ENCODE measurements at regions of chr18 and their contacts with region 1.

Region 1: DNA sequence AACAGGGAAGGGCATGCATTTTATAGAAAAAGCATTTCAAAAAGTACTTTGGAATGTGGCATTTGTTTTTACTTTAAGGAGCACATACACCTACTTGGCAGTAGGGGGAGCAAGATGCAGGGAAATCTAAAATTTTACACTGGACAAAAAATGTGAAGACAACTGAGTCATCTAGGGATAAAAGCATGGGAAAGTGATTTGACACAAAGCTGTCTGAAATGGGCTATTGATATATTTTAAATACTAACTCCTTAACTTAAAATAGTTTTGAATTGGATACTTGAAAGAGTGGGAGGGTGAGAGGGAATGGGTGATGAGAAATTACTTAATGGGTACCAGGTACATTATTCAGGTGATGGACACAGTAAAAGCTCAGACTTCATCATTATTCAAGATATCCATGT is 15.8 kb downstream of the TMEM200C start:
- DNase-seq: peak in 1 of 2 experiments; percentile 31
- H3K4me3 ChIP-seq: no peak overlapping the region
- H3K4me3 Mint-ChIP-seq: no peak overlapping the region
- H3K27ac Mint-ChIP-seq: no peak overlapping the region
- H3K4me1 ChIP-seq: no peaks in the 10 kb centered on the region
- H3K4me1 Mint-ChIP-seq: no peaks in the 10 kb centered on the region
- H3K27me3 ChIP-seq: 0 out of 2 replicates have a peak, but pooled peaks cover 2% of the 10 kb centered on the region
- H3K27me3 Mint-ChIP-seq: no peaks in the 10 kb centered on the region
- CTCF ChIP-seq: peak; percentile 72 to 75

Region 2: GRCh38 chr18:5951515-5952091 is 72.1 kb after region 1 on chr18:
- CTCF ChIA-PET with region 1: no interaction called
- POLR2A ChIA-PET with region 1: no interaction called
- intact Hi-C with region 1: loop called (anchors 1 kb)
- DNase-seq: no peak
- H3K4me3 ChIP-seq: no peak overlapping the region
- H3K4me3 Mint-ChIP-seq: no peak overlapping the region
- H3K27ac Mint-ChIP-seq: no peak overlapping the region
- H3K4me1 ChIP-seq: no peaks in the 10 kb centered on the region
- H3K4me1 Mint-ChIP-seq: no peaks in the 10 kb centered on the region
- H3K27me3 ChIP-seq: no peaks in the 10 kb centered on the region
- H3K27me3 Mint-ChIP-seq: peaks cover 10% of the 10 kb centered on the region
- CTCF ChIP-seq: no peak

Region 3: DNA sequence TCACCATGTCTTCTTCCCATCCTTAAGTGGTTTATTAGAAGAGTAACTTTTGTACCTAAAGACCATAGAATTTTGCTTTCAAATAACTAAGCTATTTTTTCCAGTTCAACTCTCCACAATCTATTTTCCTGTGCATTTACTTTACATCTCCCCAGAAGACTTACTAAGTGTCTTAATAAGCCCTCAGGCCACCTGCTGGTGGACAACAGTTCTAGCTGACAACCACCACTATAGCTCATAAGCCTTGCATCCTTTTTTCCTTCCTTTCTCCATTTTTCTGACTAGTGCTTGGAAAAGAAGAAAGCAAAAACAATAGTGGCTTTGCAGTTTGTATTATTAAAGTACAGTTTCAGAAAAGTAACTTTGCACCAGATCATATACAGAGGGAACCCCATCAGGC is 165.3 kb after region 1 on chr18:
- CTCF ChIA-PET with region 1: no interaction called
- POLR2A ChIA-PET with region 1: no interaction called
- intact Hi-C with region 1: loop called (anchors 1 kb)
- DNase-seq: no peak
- H3K4me3 ChIP-seq: no peak overlapping the region
- H3K4me3 Mint-ChIP-seq: no peak overlapping the region
- H3K27ac Mint-ChIP-seq: no peak overlapping the region
- H3K4me1 ChIP-seq: no peaks in the 10 kb centered on the region
- H3K4me1 Mint-ChIP-seq: no peaks in the 10 kb centered on the region
- H3K27me3 ChIP-seq: no peaks in the 10 kb centered on the region; the same call in 1 of the 2 replicates
- H3K27me3 Mint-ChIP-seq: peaks cover 19% of the 10 kb centered on the region
- CTCF ChIP-seq: peak; percentile 21 to 37

Region 4: GRCh38 chr18:6056146-6056932 is 176.9 kb after region 1 on chr18:
- CTCF ChIA-PET with region 1: no interaction called
- POLR2A ChIA-PET with region 1: no interaction called
- intact Hi-C with region 1: no loop called
- DNase-seq: no peak
- H3K4me3 ChIP-seq: no peak overlapping the region
- H3K4me3 Mint-ChIP-seq: no peak overlapping the region
- H3K27ac Mint-ChIP-seq: no peak overlapping the region
- H3K4me1 ChIP-seq: no peaks in the 10 kb centered on the region
- H3K4me1 Mint-ChIP-seq: no peaks in the 10 kb centered on the region
- H3K27me3 ChIP-seq: no peaks in the 10 kb centered on the region
- H3K27me3 Mint-ChIP-seq: peaks cover 3% of the 10 kb centered on the region
- CTCF ChIP-seq: no peak

Region 5: GRCh38 chr18:6096730-6097129 is 217.2 kb after region 1 on chr18:
- CTCF ChIA-PET with region 1: no interaction called
- POLR2A ChIA-PET with region 1: no interaction called
- intact Hi-C with region 1: no loop called
- DNase-seq: no peak
- H3K4me3 ChIP-seq: no peak overlapping the region
- H3K4me3 Mint-ChIP-seq: no peak overlapping the region
- H3K27ac Mint-ChIP-seq: no peak overlapping the region
- H3K4me1 ChIP-seq: no peaks in the 10 kb centered on the region
- H3K4me1 Mint-ChIP-seq: no peaks in the 10 kb centered on the region
- H3K27me3 ChIP-seq: no peaks in the 10 kb centered on the region
- H3K27me3 Mint-ChIP-seq: peaks cover 27% of the 10 kb centered on the region
- CTCF ChIP-seq: no peak

Region 6: GRCh38 chr18:6132751-6133368 is 253.4 kb after region 1 on chr18:
- CTCF ChIA-PET with region 1: no interaction called
- POLR2A ChIA-PET with region 1: no interaction called
- intact Hi-C with region 1: no loop called
- DNase-seq: no peak
- H3K4me3 ChIP-seq: no peak overlapping the region
- H3K4me3 Mint-ChIP-seq: no peak overlapping the region
- H3K27ac Mint-ChIP-seq: no peak overlapping the region
- H3K4me1 ChIP-seq: no peaks in the 10 kb centered on the region
- H3K4me1 Mint-ChIP-seq: no peaks in the 10 kb centered on the region
- H3K27me3 ChIP-seq: no peaks in the 10 kb centered on the region
- H3K27me3 Mint-ChIP-seq: peaks cover 12% of the 10 kb centered on the region
- CTCF ChIP-seq: no peak

Region 7: GRCh38 chr18:6219116-6219717 is 339.7 kb after region 1 on chr18:
- CTCF ChIA-PET with region 1: no interaction called
- POLR2A ChIA-PET with region 1: no interaction called
- intact Hi-C with region 1: loop called (anchors 1 kb)
- DNase-seq: peak; percentile 44 to 65
- H3K4me3 ChIP-seq: no peak overlapping the region
- H3K4me3 Mint-ChIP-seq: no peak overlapping the region
- H3K27ac Mint-ChIP-seq: no peak overlapping the region
- H3K4me1 ChIP-seq: no peaks in the 10 kb centered on the region
- H3K4me1 Mint-ChIP-seq: no peaks in the 10 kb centered on the region
- H3K27me3 ChIP-seq: no peaks in the 10 kb centered on the region
- H3K27me3 Mint-ChIP-seq: peaks cover 2% of the 10 kb centered on the region
- CTCF ChIP-seq: peak; percentile 65 to 91

Region 8: DNA sequence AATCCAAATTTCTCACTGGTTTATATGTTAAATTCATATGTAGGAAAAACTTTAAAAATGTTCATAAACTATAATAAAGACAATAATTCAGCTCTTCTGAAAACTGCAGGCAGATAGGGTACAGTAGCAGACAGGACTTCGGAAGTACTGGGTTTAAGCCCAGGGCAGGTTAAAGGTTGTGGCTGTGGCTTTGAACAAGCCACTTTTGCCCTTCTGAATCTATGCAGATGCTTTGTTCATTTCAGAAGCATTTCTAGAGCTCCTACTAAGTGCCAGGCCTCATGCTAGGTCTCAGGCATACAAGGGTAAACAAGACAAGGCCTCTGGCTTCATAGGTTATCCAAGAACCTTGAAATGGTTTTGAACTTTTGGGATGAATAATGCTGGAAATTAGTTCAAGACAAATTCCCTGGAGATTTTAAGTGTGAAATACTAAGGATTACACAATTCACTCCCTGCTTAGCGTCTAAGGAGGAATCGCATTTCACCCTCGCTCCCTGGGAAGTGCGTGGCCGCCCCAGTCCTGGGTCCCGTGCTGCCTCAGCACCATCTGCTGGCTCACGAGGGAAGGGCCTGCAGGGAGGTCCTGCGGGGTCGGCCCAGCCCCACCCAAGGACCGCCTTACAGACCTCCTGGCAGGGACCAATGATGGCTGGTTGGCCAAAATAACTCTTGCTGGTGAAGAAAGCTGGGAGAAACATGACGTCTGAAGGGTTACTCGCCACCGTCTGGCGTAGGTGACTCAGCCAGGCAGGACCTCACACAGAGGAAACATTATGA is 602.9 kb after region 1 on chr18:
- CTCF ChIA-PET with region 1: no interaction called
- POLR2A ChIA-PET with region 1: no interaction called
- intact Hi-C with region 1: loop called (anchors 2 kb)
- DNase-seq: peak; percentile 47 to 73
- H3K4me3 ChIP-seq: no peak overlapping the region
- H3K4me3 Mint-ChIP-seq: no peak overlapping the region
- H3K27ac Mint-ChIP-seq: no peak overlapping the region
- H3K4me1 ChIP-seq: no peaks in the 10 kb centered on the region
- H3K4me1 Mint-ChIP-seq: no peaks in the 10 kb centered on the region
- H3K27me3 ChIP-seq: no peaks in the 10 kb centered on the region
- H3K27me3 Mint-ChIP-seq: peaks cover 24% of the 10 kb centered on the region
- CTCF ChIP-seq: peak; percentile 70 to 73

Region 9: GRCh38 chr18:6885992-6886796 is 1006.7 kb after region 1 on chr18:
- CTCF ChIA-PET with region 1: no interaction called
- POLR2A ChIA-PET with region 1: no interaction called
- intact Hi-C with region 1: loop called (anchors 5 kb)
- DNase-seq: peak in 1 of 2 experiments; percentile 68
- H3K4me3 ChIP-seq: no peak overlapping the region
- H3K4me3 Mint-ChIP-seq: no peak overlapping the region
- H3K27ac Mint-ChIP-seq: no peak overlapping the region
- H3K4me1 ChIP-seq: no peaks in the 10 kb centered on the region
- H3K4me1 Mint-ChIP-seq: no peaks in the 10 kb centered on the region
- H3K27me3 ChIP-seq: no peaks in the 10 kb centered on the region
- H3K27me3 Mint-ChIP-seq: no peaks in the 10 kb centered on the region
- CTCF ChIP-seq: peak; percentile 67 to 78

Measured in Caco-2 (cell line).